Activated CD4-positive, alpha-beta memory T cell treated with anti-CD3 and anti-CD28 coated beads for 36 hours (primary cell): ENCODE measurements at regions of chr16 and their contacts with region 1.

Region 1: DNA sequence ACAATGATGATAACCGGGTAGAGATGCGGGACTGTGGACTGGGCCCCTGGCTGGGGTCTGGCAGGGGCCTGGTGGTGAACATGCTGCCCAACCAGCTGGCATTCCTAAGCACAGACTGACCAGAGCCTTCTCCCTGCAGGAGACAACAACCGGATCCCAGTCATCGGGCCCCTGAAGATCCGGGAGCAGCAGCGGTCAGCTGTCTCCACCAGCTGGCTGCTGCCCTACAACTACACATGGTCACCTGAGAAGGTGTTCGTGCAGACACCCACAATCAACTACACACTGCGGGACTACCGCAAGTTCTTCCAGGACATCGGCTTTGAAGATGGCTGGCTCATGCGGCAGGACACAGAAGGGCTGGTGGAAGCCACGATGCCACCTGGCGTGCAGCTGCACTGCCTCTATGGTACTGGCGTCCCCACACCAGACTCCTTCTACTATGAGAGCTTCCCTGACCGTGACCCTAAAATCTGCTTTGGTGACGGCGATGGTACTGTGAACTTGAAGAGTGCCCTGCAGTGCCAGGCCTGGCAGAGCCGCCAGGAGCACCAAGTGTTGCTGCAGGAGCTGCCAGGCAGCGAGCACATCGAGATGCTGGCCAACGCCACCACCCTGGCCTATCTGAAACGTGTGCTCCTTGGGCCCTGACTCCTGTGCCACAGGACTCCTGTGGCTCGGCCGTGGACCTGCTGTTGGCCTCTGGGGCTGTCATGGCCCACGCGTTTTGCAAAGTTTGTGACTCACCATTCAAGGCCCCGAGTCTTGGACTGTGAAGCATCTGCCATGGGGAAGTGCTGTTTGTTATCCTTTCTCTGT is 5.1 kb upstream of the SLC7A6 start:
- DNase-seq: no peak
- H3K4me3 Mint-ChIP-seq: no peak overlapping the region
- H3K27ac Mint-ChIP-seq: no peak overlapping the region
- H3K4me1 Mint-ChIP-seq: peaks cover 15% of the 10 kb centered on the region
- H3K27me3 Mint-ChIP-seq: no peaks in the 10 kb centered on the region

Region 2: DNA sequence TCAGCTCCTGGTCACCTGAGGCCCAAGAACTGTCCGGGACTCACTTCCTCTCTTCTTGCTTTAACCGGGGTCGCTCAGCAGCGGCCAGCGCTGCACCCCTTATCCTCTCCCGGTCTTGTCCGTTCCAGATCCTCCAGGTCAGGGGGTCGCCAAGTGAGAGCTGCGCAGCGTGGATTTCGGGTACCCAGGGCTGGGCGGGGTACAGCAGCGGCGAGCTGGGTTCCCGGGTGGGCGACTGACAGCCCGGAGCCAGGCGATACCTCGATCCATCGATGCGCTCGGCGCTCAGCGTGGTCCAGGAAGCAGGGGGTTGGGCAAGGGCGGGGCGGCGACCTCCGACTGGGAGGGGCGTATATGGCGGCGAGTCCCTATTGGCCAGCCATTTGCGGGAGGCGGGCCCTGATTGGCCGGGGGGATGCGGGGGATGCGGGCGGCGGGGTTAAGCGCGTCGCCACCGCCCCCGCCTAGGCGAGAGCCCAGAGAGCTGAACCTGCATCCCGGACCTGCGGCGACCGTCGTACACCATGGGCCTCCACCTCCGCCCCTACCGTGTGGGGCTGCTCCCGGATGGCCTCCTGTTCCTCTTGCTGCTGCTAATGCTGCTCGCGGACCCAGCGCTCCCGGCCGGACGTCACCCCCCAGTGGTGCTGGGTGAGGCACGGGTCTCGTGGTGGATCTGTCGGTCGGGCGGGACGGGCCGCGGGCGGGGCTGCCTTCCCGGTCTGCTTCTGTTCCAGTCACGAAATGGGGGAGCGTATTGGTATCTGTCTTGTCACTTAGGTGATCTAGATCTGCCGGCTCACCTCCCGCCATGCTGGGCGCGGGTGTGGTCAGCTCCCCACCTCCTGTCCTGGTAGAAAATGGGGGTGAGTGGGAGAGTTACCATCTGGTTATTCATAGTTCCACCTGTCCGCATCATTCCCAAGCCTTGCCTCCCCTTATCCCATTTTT is 14.0 kb before region 1 on chr16 and contains the start of gene PLA2G15:
- CTCF ChIA-PET with region 1: interaction called, 27 read pairs
- POLR2A ChIA-PET with region 1: interaction called, 9 read pairs
- intact Hi-C with region 1: no loop called
- DNase-seq: peak; percentile 98
- H3K4me3 Mint-ChIP-seq: peak within 1 kb of the TSS; percentile 89
- H3K27ac Mint-ChIP-seq: peak within 1 kb of the TSS; percentile 34
- H3K4me1 Mint-ChIP-seq: peaks cover 25% of the 10 kb centered on the region
- H3K27me3 Mint-ChIP-seq: no peaks in the 10 kb centered on the region
- total RNA-seq, gene PLA2G15: 8.0 to 8.7 TPM

Region 3: DNA sequence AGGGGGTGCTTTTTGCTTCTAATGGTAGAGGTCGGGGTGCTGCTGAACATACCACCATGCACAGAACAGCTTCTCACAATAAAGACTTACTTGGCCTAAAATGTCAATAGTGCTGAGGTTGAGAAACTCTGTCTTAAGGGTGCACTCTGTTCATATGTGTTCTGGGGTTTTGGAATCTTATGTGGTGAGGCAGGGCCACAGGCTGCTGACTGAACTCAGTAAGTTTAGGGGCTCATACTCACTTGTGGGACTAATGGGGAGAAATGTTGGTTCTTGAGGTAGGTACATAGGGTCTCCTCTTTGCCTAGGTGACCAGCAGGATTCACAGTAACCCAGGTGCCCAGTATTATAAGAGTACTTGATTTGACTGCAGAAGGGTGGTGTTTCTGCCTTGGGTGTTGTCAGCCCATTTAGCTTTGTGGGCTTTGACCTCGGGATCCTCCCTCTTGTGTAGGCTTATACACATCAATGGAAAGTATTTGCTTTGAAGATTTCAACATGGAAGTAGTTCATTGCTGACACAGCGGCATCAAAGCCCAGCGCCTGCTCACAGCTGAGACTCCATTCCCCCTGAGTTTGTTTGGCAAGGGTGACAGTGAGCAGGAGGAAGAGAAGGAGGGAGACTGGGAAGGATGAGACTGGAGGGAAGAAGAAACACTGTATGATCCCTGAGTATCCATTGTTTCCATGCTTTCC is 22.3 kb after region 1 on chr16:
- CTCF ChIA-PET with region 1: interaction called, 237 read pairs
- POLR2A ChIA-PET with region 1: interaction called, 23 read pairs
- intact Hi-C with region 1: no loop called
- DNase-seq: peak; percentile 38
- H3K4me3 Mint-ChIP-seq: no peak overlapping the region
- H3K27ac Mint-ChIP-seq: peak overlapping the region; percentile 89
- H3K4me1 Mint-ChIP-seq: peaks cover 67% of the 10 kb centered on the region
- H3K27me3 Mint-ChIP-seq: no peaks in the 10 kb centered on the region